Mammary epithelial cell (primary cell): ENCODE measurements at regions of chr10 and their contacts with region 1.

Region 1: GRCh38 chr10:124916585-124917427 is 25.1 kb upstream of the ZRANB1 start:
- DNase-seq: peak; percentile 94
- H3K4me3 ChIP-seq: peak overlapping the region; percentile 66 to 95 (median 87)
- H3K27ac ChIP-seq: peak overlapping the region; percentile 91
- H3K4me1 ChIP-seq: peaks cover 25% of the 10 kb centered on the region
- H3K27me3 ChIP-seq: no peaks in the 10 kb centered on the region
- CTCF ChIP-seq: peak in 1 of 2 donors; percentile 5

Region 2: GRCh38 chr10:124875596-124875995 is 41.2 kb before region 1 on chr10:
- CTCF ChIA-PET with region 1: no interaction called
- dilution Hi-C with region 1: no loop called
- in situ Hi-C with region 1: no loop called
- intact Hi-C with region 1: loop called (anchors 5 kb)
- DNase-seq: peak; percentile 50
- H3K4me3 ChIP-seq: no peak overlapping the region
- H3K27ac ChIP-seq: no peak overlapping the region
- H3K4me1 ChIP-seq: no peaks in the 10 kb centered on the region
- H3K27me3 ChIP-seq: no peaks in the 10 kb centered on the region
- CTCF ChIP-seq: peak in 1 of 2 donors; percentile 34

Region 3: DNA sequence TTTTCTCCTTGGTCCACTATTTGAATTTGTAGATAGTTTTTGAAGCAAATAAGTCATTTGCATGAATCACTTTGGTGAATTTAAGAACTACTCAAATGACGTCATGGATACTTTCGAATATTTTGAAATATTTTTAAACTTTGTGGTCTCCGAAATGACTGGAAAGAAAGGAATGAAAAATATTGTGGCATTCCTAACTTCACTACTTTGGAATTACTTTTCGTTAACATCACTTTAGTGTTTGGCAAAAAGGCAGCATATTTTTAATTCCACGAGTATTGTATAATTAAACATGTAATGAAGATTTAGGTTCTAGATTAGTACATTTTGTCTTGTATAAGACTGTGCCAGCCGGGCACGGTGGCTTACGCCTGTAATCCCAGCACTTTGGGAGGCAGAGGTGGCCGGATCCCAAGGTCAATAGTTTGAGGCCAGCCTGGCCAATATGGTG is 10.2 kb before region 1 on chr10:
- CTCF ChIA-PET with region 1: no interaction called
- dilution Hi-C with region 1: no loop called
- in situ Hi-C with region 1: no loop called
- intact Hi-C with region 1: loop called (anchors 1 kb)
- DNase-seq: peak; percentile 79
- H3K4me3 ChIP-seq: no peak overlapping the region
- H3K27ac ChIP-seq: peak overlapping the region; percentile 18
- H3K4me1 ChIP-seq: peaks cover 9% of the 10 kb centered on the region
- H3K27me3 ChIP-seq: no peaks in the 10 kb centered on the region
- CTCF ChIP-seq: no peak

Region 4: GRCh38 chr10:124943301-124944092 is 26.7 kb after region 1 on chr10:
- CTCF ChIA-PET with region 1: no interaction called
- dilution Hi-C with region 1: no loop called
- in situ Hi-C with region 1: no loop called
- intact Hi-C with region 1: loop called (anchors 2 kb)
- DNase-seq: peak; percentile 60
- H3K4me3 ChIP-seq: no peak overlapping the region
- H3K27ac ChIP-seq: peak overlapping the region; percentile 30
- H3K4me1 ChIP-seq: peaks cover 7% of the 10 kb centered on the region
- H3K27me3 ChIP-seq: no peaks in the 10 kb centered on the region
- CTCF ChIP-seq: no peak

Region 5: DNA sequence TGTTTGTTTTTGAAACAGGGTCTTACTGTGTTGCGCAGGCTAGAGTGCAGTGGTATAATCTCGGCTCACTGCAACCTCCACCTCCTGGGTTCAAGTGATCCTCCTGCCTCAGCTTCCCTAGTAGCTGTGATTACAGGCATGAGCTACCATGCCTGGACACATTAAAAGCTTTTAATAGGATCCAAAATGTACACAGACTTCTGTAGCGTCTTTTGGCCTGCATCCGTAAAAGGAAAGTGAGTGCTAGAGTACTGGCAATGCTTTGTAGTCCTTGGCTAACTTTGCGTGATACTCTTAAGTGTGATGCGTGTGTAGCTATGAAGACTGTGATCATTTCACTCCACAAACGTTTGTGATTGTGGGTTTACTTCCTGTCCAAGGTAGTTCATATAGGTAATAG is 38.4 kb after region 1 on chr10:
- CTCF ChIA-PET with region 1: no interaction called
- dilution Hi-C with region 1: no loop called
- in situ Hi-C with region 1: no loop called
- intact Hi-C with region 1: no loop called
- DNase-seq: no peak
- H3K4me3 ChIP-seq: no peak overlapping the region
- H3K27ac ChIP-seq: no peak overlapping the region
- H3K4me1 ChIP-seq: no peaks in the 10 kb centered on the region
- H3K27me3 ChIP-seq: no peaks in the 10 kb centered on the region
- CTCF ChIP-seq: no peak

Region 6: GRCh38 chr10:125231116-125231812 is 314.5 kb after region 1 on chr10:
- CTCF ChIA-PET with region 1: no interaction called
- dilution Hi-C with region 1: no loop called
- in situ Hi-C with region 1: no loop called
- intact Hi-C with region 1: no loop called
- DNase-seq: peak; percentile 84
- H3K4me3 ChIP-seq: no peak overlapping the region
- H3K27ac ChIP-seq: peak overlapping the region; percentile 61
- H3K4me1 ChIP-seq: peaks cover 39% of the 10 kb centered on the region
- H3K27me3 ChIP-seq: no peaks in the 10 kb centered on the region
- CTCF ChIP-seq: peak in 1 of 2 donors; percentile 28